Ascending aorta (tissue), 2 donors: ENCODE measurements at regions of chr13 and their contacts with region 1.

Region 1: DNA sequence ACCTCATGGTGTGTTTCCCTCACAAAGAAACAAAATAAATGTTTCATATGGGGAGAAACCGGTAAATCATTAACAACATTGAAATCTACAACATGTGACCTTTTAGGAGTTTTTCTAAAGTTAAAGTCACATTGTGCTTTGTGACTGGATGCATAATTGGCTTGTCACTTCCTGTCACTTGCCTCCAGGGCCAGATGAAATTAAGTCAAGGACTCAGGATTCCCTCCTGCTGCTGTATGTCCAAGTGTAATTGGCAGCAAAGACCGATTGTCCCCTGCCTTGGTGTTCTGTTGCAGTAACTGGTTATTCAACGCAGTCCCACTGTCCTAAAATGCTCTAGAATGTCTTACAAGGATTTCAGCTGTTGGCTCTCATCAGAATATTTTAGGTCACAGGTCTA is 448.2 kb downstream of the LIG4 start:
- DNase-seq: no peak
- H3K4me3 ChIP-seq: no peak overlapping the region
- H3K27ac ChIP-seq: no peak overlapping the region
- H3K4me1 ChIP-seq: no peaks in the 10 kb centered on the region
- H3K27me3 ChIP-seq: no peaks in the 10 kb centered on the region
- CTCF ChIP-seq: no peak

Region 2: GRCh38 chr13:107361666-107362065 is 405.5 kb before region 1 on chr13:
- intact Hi-C with region 1: no loop called
- DNase-seq: no peak
- H3K4me3 ChIP-seq: no peak overlapping the region
- H3K27ac ChIP-seq: no peak overlapping the region
- H3K4me1 ChIP-seq: no peaks in the 10 kb centered on the region
- H3K27me3 ChIP-seq: no peaks in the 10 kb centered on the region
- CTCF ChIP-seq: no peak

Region 3: DNA sequence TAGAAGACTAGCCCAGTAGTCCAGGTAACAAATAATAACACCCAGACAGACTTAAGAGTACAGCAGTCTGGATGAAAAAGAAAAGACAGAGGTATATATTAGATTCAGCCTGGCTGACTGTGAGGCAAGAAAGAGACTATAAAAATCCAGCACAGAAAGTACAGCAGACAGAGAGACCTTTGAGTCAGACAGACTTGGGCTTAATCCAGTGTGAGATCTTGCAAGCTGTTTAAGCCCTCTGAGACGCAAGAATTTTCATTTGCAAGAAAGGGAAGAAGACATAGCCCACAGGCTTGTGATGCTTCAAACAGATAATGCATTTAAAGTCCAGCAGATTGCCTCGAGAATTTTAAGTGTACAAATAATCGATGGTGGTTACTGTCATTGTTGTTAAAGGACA is 23.1 kb before region 1 on chr13:
- intact Hi-C with region 1: loop called (anchors 1 kb)
- DNase-seq: no peak
- H3K4me3 ChIP-seq: no peak overlapping the region
- H3K27ac ChIP-seq: no peak overlapping the region
- H3K4me1 ChIP-seq: no peaks in the 10 kb centered on the region
- H3K27me3 ChIP-seq: no peaks in the 10 kb centered on the region
- CTCF ChIP-seq: no peak